HEK293 (cell line): ENCODE measurements at regions of chr5 and their contacts with region 1.

Region 1: DNA sequence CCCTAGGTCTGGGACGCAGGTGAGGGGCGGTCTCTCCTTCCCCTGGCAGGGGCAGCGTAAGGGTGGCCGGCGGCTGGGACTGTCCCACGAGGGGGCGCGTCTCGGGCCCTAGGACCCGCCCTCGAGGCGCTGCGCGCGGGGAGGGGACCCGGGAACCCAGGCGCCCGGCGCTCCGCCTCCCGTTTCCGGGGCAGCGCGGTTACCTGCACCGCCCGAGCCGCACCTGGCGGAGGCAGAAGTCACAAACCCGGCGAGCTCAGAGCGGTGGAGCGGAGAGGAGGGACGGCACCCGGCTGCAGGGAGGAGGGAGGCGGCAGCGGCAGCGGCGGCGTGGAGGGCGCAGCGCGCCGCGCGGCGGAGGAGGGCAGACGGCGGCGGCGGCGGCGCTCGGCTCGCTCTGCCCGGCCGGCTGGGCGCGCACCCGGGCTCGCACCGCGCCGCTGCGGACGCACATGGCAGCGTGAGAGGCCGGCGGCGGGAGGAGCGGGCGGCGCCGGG is at the start of gene WWC1:
- H3K4me3 ChIP-seq: peak within 1 kb of the TSS; percentile 66
- H3K27ac ChIP-seq: peak within 1 kb of the TSS; percentile 64; the same call in 1 of the 2 replicates
- H3K4me1 ChIP-seq: peaks cover 3% of the 10 kb centered on the region; the same call in 1 of the 2 replicates
- CTCF ChIP-seq: peak; percentile 85

Region 2: DNA sequence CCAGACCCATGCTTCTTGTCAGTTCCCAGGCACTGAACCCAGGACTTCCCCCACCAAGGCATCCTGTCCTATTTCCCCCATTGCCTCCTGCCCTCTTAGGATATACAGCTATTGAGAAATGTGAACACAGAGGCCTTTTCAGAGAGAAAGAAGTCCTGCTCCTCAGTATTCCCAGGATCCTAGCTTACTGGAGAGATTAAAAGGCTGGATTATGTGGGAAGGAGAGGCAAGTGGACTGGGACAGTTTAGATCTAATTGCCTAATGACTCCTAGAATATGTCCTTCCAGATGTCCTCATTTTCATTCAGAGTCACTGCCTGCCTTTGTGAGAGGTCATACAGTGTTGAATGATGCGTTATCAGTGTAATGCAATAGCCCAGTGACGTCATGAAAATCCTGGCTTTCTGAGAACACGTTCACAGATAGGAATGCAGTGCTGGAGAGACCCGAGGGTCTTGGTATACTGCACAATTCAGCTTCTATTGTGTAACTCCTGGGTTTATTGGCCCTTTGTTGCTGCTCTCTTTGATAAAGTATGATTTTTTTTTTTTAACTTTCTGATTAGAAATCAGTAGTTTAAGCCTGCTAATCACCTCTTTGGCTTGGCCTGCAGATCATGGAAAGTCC is 26.1 kb after region 1 on chr5:
- CTCF ChIA-PET with region 1: interaction called, 7 read pairs
- POLR2A ChIA-PET with region 1: interaction called, 15 read pairs
- H3K4me3 ChIP-seq: no peak overlapping the region
- H3K27ac ChIP-seq: no peak overlapping the region
- H3K4me1 ChIP-seq: peaks cover 11% of the 10 kb centered on the region; the same call in 1 of the 2 replicates
- CTCF ChIP-seq: no peak